B cell (primary cell): ENCODE measurements at regions of chr11 and their contacts with region 1.

Region 1: GRCh38 chr11:72924568-72925190 is 110.5 kb downstream of the ATG16L2 start:
- DNase-seq: peak; percentile 53
- ATAC-seq: peak; percentile 54
- H3K4me3 ChIP-seq: no peak overlapping the region
- H3K4me3 Mint-ChIP-seq: no peak overlapping the region
- H3K27ac ChIP-seq: peak overlapping the region in 1 of 2 donors; percentile 72
- H3K27ac Mint-ChIP-seq: peak overlapping the region; percentile 73
- H3K4me1 ChIP-seq: peaks cover 14 to 18% of the 10 kb centered on the region in 2 donors
- H3K4me1 Mint-ChIP-seq: peaks cover 43% of the 10 kb centered on the region
- H3K27me3 ChIP-seq: no peaks in the 10 kb centered on the region
- H3K27me3 Mint-ChIP-seq: no peaks in the 10 kb centered on the region
- CTCF ChIP-seq: peak; percentile 70

Region 2: GRCh38 chr11:73135346-73136284 is 210.9 kb after region 1 on chr11:
- CTCF ChIA-PET with region 1: interaction called, 16 read pairs
- POLR2A ChIA-PET with region 1: no interaction called
- intact Hi-C with region 1: loop called (anchors 2 kb)
- DNase-seq: no peak
- ATAC-seq: no peak
- H3K4me3 ChIP-seq: no peak overlapping the region
- H3K4me3 Mint-ChIP-seq: no peak overlapping the region
- H3K27ac ChIP-seq: peak overlapping the region; percentile 25 to 62
- H3K27ac Mint-ChIP-seq: peak overlapping the region; percentile 68
- H3K4me1 ChIP-seq: peaks cover 39 to 43% of the 10 kb centered on the region in 2 donors
- H3K4me1 Mint-ChIP-seq: peaks cover 73% of the 10 kb centered on the region
- H3K27me3 ChIP-seq: no peaks in the 10 kb centered on the region
- H3K27me3 Mint-ChIP-seq: no peaks in the 10 kb centered on the region
- CTCF ChIP-seq: no peak

Region 3: GRCh38 chr11:73242251-73243079 is 317.8 kb after region 1 on chr11:
- CTCF ChIA-PET with region 1: interaction called, 7 read pairs
- POLR2A ChIA-PET with region 1: no interaction called
- intact Hi-C with region 1: loop called (anchors 1 kb)
- DNase-seq: peak; percentile 81
- ATAC-seq: peak; percentile 89
- H3K4me3 ChIP-seq: no peak overlapping the region
- H3K4me3 Mint-ChIP-seq: no peak overlapping the region
- H3K27ac ChIP-seq: no peak overlapping the region
- H3K27ac Mint-ChIP-seq: no peak overlapping the region
- H3K4me1 ChIP-seq: peaks cover 4 to 7% of the 10 kb centered on the region in 2 donors
- H3K4me1 Mint-ChIP-seq: peaks cover 6% of the 10 kb centered on the region
- H3K27me3 ChIP-seq: peaks cover 0 to 2% (median 0%) of the 10 kb centered on the region in 4 experiments
- H3K27me3 Mint-ChIP-seq: peaks cover 3% of the 10 kb centered on the region
- CTCF ChIP-seq: peak; percentile 79